Activated B cell treated with CpG ODN at 0.5 μM for 24 hours (primary cell): ENCODE measurements at regions of chr5 and their contacts with region 1.

Region 1: GRCh38 chr5:154395407-154396258 is 50.2 kb upstream of the SAP30L start:
- DNase-seq: peak; percentile 22
- ATAC-seq: peak; percentile 83
- H3K4me3 Mint-ChIP-seq: no peak overlapping the region
- H3K27ac Mint-ChIP-seq: peak overlapping the region; percentile 42
- H3K4me1 Mint-ChIP-seq: peaks cover 16% of the 10 kb centered on the region
- H3K27me3 Mint-ChIP-seq: no peaks in the 10 kb centered on the region
- CTCF ChIP-seq: no peak

Region 2: DNA sequence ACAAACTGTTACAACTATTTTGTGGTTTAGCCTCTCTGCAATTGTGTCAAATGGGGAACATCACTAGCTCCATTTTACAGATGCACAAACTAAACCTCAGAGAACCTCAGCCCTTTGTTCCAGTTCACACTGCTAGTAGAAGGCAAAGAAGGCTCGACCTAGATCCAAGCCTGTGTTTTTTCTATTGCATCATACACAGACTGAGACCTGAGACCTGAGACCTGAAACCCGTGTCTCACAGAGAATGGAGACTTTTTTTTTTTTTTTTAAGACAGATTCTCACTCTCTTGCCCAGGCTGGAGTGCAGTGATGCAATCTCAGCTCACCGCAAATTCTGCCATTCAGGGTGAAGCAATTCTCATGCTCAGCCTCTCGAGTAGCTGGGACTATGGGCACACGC is 84.3 kb before region 1 on chr5:
- CTCF ChIA-PET with region 1: no interaction called
- POLR2A ChIA-PET with region 1: no interaction called
- intact Hi-C with region 1: no loop called
- DNase-seq: no peak
- ATAC-seq: no peak
- H3K4me3 Mint-ChIP-seq: no peak overlapping the region
- H3K27ac Mint-ChIP-seq: no peak overlapping the region
- H3K4me1 Mint-ChIP-seq: no peaks in the 10 kb centered on the region
- H3K27me3 Mint-ChIP-seq: no peaks in the 10 kb centered on the region
- CTCF ChIP-seq: no peak

Region 3: GRCh38 chr5:154384480-154385235 is 11.0 kb before region 1 on chr5:
- CTCF ChIA-PET with region 1: interaction called, 4 read pairs
- POLR2A ChIA-PET with region 1: interaction called, 7 read pairs
- intact Hi-C with region 1: loop called (anchors 1 kb)
- DNase-seq: peak; percentile 28
- ATAC-seq: peak; percentile 87
- H3K4me3 Mint-ChIP-seq: peak overlapping the region; percentile 79
- H3K27ac Mint-ChIP-seq: peak overlapping the region; percentile 85
- H3K4me1 Mint-ChIP-seq: peaks cover 33% of the 10 kb centered on the region
- H3K27me3 Mint-ChIP-seq: no peaks in the 10 kb centered on the region
- CTCF ChIP-seq: no peak